ENCODE measurements at regions of chr21 and their contacts with region 1.

Region 1: GRCh38 chr21:14545906-14546480 is at the start of gene SAMSN1:
- DNase-seq: peak; percentile 85
- H3K4me3 ChIP-seq: peak within 1 kb of the TSS; percentile 12 to 91 (median 49)
- H3K27ac ChIP-seq: peak within 1 kb of the TSS; percentile 79
- H3K4me1 ChIP-seq: peaks cover 45% of the 10 kb centered on the region
- H3K27me3 ChIP-seq: no peaks in the 10 kb centered on the region
- CTCF ChIP-seq: no peak
- POLR2A ChIP-seq: peak; percentile 69
- total RNA-seq, gene SAMSN1: 5.3 and 8.0 TPM in 2 replicates

Region 2: GRCh38 chr21:14306151-14306907 is 239.7 kb before region 1 on chr21:
- CTCF ChIA-PET with region 1: no interaction called
- POLR2A ChIA-PET with region 1: no interaction called
- dilution Hi-C with region 1: no loop called
- intact Hi-C with region 1: loop called (anchors 10 kb)
- DNase-seq: peak; percentile 43
- H3K4me3 ChIP-seq: no peak overlapping the region
- H3K27ac ChIP-seq: peak overlapping the region; percentile 10
- H3K4me1 ChIP-seq: peaks cover 8% of the 10 kb centered on the region
- H3K27me3 ChIP-seq: no peaks in the 10 kb centered on the region
- CTCF ChIP-seq: no peak
- POLR2A ChIP-seq: no peak

Region 3: DNA sequence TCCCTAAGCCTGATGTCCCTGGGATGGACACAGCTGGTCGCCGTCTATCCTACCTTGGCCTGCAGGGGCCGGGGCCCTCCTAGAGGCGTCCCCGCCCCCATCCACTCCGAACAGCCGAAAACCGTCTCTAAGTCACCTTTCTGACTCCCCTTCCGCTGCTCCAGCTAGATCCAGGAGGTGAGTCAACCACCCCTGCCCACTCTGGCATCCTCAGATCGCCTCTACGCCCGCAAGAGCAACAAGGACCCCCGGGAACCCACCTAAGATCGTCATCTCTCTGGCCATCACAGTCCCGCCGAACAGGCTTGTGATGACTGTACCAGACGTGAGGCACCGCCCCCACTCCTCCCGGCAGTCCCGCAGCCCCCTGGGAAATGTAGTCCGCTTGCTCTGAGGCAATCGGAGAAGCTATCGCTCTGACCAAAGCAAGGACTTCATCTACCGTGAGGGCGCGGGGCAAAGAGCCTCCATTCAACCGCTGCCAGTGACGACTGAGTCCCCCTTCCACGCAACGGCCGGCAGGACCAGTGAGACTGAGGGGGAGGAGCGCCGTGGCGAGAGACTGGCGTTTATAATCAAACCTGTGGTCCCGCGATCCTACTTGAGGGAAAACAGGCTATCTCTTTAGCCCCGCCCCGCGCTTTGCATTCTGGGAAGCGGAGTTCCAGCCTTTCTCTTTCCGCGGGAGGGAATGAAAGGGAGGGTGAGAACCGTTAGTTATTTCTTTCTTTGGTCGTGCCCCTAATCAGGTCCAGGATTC is 163.0 kb before region 1 on chr21 and contains the start of gene HSPA13:
- CTCF ChIA-PET with region 1: no interaction called
- POLR2A ChIA-PET with region 1: no interaction called
- dilution Hi-C with region 1: no loop called
- intact Hi-C with region 1: loop called (anchors 5 kb)
- DNase-seq: peak; percentile 100
- H3K4me3 ChIP-seq: peak within 1 kb of the TSS; percentile 85 to 91 (median 85)
- H3K27ac ChIP-seq: peak within 1 kb of the TSS; percentile 93
- H3K4me1 ChIP-seq: peaks cover 26% of the 10 kb centered on the region
- H3K27me3 ChIP-seq: no peaks in the 10 kb centered on the region
- CTCF ChIP-seq: peak in 1 of 2 donors; percentile 14
- POLR2A ChIP-seq: peak; percentile 76
- total RNA-seq, gene HSPA13: 40.4 and 44.8 TPM in 2 replicates

Region 4: DNA sequence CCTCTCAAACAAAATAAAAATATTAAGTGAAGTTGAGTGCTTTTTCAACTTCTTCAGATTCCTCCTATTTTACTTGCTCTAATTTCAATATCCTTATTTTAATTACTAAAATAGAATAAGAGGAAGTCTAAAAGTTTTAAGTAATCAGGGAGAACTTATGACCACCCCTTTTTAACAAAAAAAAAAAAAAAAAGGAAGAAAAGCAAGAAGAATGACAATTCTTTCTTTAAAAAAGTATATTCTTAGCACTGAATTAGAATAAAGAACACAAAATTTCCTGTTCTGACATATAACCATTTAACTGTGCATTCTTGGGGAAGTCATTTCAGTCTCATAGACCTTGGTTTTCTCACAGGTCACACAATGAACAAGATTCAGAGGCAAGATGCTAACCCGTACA is 46.7 kb before region 1 on chr21:
- CTCF ChIA-PET with region 1: no interaction called
- POLR2A ChIA-PET with region 1: no interaction called
- dilution Hi-C with region 1: no loop called
- intact Hi-C with region 1: no loop called
- DNase-seq: no peak
- H3K4me3 ChIP-seq: no peak overlapping the region
- H3K27ac ChIP-seq: no peak overlapping the region
- H3K4me1 ChIP-seq: no peaks in the 10 kb centered on the region
- H3K27me3 ChIP-seq: no peaks in the 10 kb centered on the region
- CTCF ChIP-seq: no peak
- POLR2A ChIP-seq: no peak

Region 5: DNA sequence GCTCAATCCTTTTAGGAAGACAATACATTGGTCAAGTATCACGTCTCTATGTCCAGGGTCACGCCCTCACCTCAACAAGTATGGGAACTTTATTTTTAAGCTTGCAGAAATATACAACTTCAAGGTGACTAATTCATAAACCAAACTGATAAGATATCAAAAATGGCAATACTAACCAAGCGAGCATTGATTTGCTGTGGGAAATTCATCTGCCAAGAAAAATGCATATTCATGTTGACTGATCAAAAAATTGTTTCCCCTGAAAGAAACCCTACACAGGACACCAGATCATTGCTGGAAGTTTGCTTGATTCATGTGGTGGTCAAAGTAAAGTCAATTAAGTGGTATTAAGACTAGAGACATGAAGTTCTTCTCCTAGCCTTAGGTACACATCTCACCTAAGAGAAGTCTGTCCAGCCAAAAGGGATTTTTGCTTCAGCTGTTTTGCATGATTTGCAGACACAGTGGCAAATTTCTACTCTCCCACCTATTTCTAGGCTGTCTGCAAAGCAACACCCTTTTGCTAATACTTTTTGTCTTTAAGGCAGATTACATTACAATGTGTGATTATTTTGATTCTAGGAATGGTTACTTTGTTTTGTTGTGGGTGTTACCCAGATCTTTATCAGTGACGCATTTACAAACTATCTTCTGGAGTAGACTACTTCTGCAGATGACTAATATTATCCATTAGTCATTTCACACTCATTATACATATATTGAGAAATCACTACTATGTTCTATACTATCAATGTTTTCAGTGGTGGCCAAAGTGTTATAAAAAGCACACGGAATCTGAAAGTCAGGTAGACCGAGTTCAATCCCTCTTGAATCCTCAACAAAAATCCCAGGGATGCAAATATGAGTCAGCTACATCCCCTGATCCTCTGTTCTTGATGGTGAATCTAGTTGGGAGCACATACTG is 12.2 kb before region 1 on chr21:
- CTCF ChIA-PET with region 1: interaction called, 3 read pairs
- POLR2A ChIA-PET with region 1: no interaction called
- dilution Hi-C with region 1: no loop called
- intact Hi-C with region 1: loop called (anchors 1 kb)
- DNase-seq: peak; percentile 77
- H3K4me3 ChIP-seq: peak overlapping the region in 1 of 3 experiments; percentile 39
- H3K27ac ChIP-seq: peak overlapping the region; percentile 91
- H3K4me1 ChIP-seq: peaks cover 17% of the 10 kb centered on the region
- H3K27me3 ChIP-seq: no peaks in the 10 kb centered on the region
- CTCF ChIP-seq: no peak
- POLR2A ChIP-seq: no peak

Region 6: DNA sequence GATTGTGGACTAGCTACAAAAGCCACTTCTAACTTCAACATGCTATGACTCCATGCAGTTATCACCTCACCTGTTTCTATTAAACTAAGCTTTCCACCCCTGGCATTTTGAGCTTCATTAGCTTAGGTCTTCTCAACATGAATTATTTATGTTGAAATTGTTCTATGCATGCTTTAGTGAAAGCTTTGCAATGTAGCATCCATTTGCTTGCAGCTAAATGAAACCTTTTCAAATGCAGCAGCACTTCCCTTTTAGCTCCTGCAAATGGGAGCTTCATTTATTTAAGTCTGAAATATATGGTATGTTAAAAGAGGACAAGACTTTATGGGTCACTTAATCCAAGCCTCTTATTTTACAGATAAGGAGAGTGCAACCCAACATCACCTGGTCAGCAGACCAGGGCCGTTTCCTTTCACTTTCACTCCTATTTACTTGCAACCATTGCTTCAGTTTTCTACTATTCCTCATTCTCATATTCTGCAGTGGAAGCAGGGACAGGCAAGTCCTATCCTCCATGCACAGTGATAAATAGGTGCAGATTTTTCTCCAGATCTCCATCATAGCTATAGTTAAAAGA is 56.5 kb after region 1 on chr21:
- CTCF ChIA-PET with region 1: no interaction called
- POLR2A ChIA-PET with region 1: no interaction called
- dilution Hi-C with region 1: no loop called
- intact Hi-C with region 1: loop called (anchors 2 kb)
- DNase-seq: no peak
- H3K4me3 ChIP-seq: no peak overlapping the region
- H3K27ac ChIP-seq: peak overlapping the region; percentile 57
- H3K4me1 ChIP-seq: peaks cover 15% of the 10 kb centered on the region
- H3K27me3 ChIP-seq: no peaks in the 10 kb centered on the region
- CTCF ChIP-seq: no peak
- POLR2A ChIP-seq: no peak

Region 7: GRCh38 chr21:14712121-14712723 is 166.2 kb after region 1 on chr21:
- CTCF ChIA-PET with region 1: interaction called, 3 read pairs
- POLR2A ChIA-PET with region 1: no interaction called
- dilution Hi-C with region 1: no loop called
- intact Hi-C with region 1: loop called (anchors 1 kb)
- DNase-seq: peak; percentile 78
- H3K4me3 ChIP-seq: no peak overlapping the region
- H3K27ac ChIP-seq: peak overlapping the region; percentile 100
- H3K4me1 ChIP-seq: peaks cover 22% of the 10 kb centered on the region
- H3K27me3 ChIP-seq: no peaks in the 10 kb centered on the region
- CTCF ChIP-seq: no peak
- POLR2A ChIP-seq: no peak